ENCODE measurements at regions of chr17 and their contacts with region 1.

Region 1: DNA sequence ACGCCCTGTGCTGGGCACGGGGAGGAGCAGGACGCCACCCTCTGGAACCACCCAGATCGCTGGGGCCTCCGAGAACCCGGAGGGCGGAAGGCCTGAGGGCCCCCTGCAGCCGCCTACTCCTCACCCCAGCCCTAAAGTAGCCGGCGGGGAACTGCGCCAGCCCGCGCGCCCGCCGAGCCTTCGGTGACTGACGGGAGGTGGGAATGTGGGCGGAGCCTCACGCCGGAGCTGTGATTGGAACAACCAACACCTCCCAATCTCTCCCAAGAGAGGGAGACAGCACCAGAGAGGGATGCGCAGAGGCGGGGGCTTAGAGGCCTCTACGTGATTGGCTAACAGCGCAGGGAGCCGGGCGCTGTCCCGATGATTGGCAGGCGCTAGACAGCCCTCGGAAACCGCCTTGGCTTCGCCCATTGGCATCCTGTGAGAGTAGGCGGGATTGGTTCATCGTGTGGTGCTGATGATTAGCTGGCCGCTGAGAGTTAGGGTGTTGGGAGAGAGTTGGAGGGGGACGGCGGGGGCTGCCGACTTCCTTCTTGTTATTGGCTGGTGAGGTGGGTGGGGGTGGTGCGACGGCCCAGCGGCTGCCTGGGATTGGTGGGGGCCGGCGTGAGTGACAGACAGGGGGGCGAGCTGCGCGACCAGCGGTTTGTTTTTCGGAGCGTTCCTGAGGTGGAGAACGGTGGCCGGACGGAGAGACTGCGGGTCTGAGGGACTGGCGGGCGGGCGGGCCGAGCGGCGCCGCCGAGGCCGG is at the start of gene MAP3K3:
- DNase-seq: peak; percentile 99
- H3K4me3 Mint-ChIP-seq: peak within 1 kb of the TSS; percentile 97
- H3K27ac Mint-ChIP-seq: peak within 1 kb of the TSS; percentile 82
- H3K4me1 Mint-ChIP-seq: peaks cover 35% of the 10 kb centered on the region
- H3K27me3 Mint-ChIP-seq: no peaks in the 10 kb centered on the region
- total RNA-seq, gene MAP3K3: 28.8 to 29.6 TPM

Region 2: DNA sequence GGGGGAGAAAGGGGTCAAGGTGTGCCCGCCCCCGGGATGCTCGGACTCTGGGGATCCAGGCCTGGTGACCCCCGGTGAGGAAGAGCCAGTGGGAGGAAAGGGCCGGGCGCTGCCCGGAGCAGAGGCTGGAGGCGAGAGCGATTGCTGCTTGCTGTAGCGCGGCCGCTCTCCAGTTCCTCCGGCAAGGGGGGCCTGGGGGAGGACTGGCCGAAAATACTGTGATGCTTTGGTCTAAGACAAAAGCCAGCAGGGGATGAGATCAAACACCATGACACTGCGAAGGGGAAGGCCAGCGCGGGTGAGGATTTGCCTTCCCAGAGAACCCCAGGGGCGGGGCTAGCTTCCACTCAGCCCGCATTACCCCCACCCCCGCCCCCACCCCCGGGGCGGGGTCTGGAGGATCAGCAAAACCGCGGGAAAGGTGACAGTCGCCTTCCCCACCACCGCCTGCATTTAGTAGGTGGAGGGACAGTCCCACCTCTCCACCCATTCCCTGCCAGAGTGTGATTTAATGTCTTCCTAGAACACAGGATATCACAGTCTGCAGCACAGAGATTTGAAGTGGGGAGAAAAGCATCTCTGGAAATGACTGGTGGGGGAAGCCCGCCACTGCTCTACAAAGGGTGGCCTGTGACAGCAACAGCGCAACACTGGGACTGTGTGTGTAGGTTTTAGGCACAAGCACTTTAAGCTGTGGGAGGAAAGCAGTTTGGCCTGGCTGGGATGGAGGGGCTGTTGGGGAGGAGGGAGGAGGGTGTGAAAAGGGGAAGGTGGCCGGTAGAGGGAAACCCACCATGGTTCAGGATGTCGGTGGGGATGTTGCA is 968.7 kb before region 1 on chr17:
- CTCF ChIA-PET with region 1: no interaction called
- intact Hi-C with region 1: loop called (anchors 1 kb)
- DNase-seq: peak; percentile 98
- H3K4me3 Mint-ChIP-seq: peak overlapping the region; percentile 76
- H3K27ac Mint-ChIP-seq: peak overlapping the region; percentile 69
- H3K4me1 Mint-ChIP-seq: peaks cover 19% of the 10 kb centered on the region
- H3K27me3 Mint-ChIP-seq: peaks cover 39% of the 10 kb centered on the region

Region 3: DNA sequence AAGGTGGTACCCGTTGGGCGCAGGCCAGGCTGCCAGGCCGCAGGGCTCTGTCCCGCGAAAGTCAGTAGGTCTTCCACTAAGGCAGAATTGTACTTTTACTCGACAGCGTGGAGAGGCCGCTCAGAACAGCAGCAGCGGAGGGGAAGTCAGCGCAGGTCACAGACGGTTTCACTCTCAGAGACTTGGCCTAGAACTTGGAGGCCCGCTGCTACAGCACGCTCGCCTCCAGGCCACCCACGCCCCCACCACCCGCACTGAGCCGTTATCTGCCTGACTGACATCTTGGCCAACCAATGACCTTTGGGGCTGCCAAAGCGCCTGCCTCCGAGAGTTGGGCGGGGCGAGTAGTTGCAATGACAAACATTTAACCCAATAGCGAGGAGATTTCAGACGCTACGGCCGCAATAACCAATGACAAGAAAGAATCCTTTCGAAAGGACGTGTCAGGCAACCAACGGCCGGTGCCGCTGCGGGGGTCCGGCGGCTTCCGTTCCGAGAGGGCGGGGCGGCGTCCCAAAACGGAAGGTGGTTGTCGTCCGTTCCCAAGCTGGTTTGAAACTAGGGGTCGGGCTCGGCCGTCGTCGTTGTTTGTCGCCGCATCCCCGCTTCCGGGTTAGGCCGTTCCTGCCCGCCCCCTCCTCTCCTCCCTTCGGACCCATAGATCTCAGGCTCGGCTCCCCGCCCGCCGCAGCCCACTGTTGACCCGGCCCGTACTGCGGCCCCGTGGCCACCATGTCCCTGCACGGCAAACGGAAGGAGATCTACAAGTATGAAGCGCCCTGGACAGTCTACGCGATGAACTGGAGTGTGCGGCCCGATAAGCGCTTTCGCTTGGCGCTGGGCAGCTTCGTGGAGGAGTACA is 71.8 kb before region 1 on chr17 and contains the start of gene DCAF7:
- CTCF ChIA-PET with region 1: no interaction called
- intact Hi-C with region 1: loop called (anchors 1 kb)
- DNase-seq: peak; percentile 100
- H3K4me3 Mint-ChIP-seq: peak within 1 kb of the TSS; percentile 82
- H3K27ac Mint-ChIP-seq: peak within 1 kb of the TSS; percentile 94
- H3K4me1 Mint-ChIP-seq: peaks cover 33% of the 10 kb centered on the region
- H3K27me3 Mint-ChIP-seq: no peaks in the 10 kb centered on the region
- total RNA-seq, gene DCAF7: 102 to 103 TPM

Region 4: GRCh38 chr17:63611354-63611753 is 10.6 kb before region 1 on chr17:
- CTCF ChIA-PET with region 1: interaction called, 11 read pairs
- intact Hi-C with region 1: no loop called
- DNase-seq: peak; percentile 65
- H3K4me3 Mint-ChIP-seq: peak overlapping the region; percentile 66
- H3K27ac Mint-ChIP-seq: peak overlapping the region; percentile 97
- H3K4me1 Mint-ChIP-seq: peaks cover 28% of the 10 kb centered on the region
- H3K27me3 Mint-ChIP-seq: no peaks in the 10 kb centered on the region

Region 5: DNA sequence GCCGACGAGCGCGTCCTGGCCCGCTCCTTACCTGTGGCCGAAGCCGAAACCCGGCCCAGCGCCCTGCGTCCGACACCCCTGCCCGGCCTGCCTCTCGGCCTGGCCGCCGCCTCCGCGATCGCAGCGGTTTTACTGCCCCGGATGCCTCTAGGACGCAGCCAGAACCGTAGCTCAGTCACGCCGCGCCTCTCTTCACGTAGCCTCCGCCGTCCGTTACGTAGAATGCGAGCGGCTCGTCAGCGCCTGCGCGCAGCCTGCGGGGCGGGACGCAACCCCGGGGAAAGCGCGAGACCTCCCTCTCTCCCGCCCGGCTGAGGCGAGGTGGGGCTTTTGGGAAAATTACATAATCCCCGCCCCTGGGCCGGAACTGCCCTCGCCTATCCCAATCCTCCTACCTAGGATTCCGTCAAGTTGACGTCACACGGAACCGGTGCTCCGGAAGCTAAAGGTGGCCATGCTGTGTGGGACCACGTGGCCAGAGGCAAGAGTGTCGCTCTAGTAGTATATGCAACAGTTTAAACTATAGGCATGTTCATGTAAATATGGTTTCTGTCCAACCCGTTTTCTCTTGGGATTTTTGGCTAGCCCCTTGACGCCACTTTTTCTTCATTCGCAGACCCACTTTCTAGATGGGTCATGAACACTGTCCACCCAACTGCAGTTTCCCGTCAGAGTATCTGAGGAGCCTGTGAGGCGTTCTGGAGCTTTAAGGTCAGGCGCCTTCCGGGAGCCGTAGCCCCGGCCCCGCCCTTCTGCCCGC is 151.6 kb after region 1 on chr17 and contains the start of gene CCDC47:
- CTCF ChIA-PET with region 1: no interaction called
- intact Hi-C with region 1: loop called (anchors 1 kb)
- DNase-seq: peak; percentile 99
- H3K4me3 Mint-ChIP-seq: peak within 1 kb of the TSS; percentile 98
- H3K27ac Mint-ChIP-seq: peak within 1 kb of the TSS; percentile 100
- H3K4me1 Mint-ChIP-seq: peaks cover 58% of the 10 kb centered on the region
- H3K27me3 Mint-ChIP-seq: no peaks in the 10 kb centered on the region
- total RNA-seq, gene CCDC47: 40.5 to 42.1 TPM

Region 6: DNA sequence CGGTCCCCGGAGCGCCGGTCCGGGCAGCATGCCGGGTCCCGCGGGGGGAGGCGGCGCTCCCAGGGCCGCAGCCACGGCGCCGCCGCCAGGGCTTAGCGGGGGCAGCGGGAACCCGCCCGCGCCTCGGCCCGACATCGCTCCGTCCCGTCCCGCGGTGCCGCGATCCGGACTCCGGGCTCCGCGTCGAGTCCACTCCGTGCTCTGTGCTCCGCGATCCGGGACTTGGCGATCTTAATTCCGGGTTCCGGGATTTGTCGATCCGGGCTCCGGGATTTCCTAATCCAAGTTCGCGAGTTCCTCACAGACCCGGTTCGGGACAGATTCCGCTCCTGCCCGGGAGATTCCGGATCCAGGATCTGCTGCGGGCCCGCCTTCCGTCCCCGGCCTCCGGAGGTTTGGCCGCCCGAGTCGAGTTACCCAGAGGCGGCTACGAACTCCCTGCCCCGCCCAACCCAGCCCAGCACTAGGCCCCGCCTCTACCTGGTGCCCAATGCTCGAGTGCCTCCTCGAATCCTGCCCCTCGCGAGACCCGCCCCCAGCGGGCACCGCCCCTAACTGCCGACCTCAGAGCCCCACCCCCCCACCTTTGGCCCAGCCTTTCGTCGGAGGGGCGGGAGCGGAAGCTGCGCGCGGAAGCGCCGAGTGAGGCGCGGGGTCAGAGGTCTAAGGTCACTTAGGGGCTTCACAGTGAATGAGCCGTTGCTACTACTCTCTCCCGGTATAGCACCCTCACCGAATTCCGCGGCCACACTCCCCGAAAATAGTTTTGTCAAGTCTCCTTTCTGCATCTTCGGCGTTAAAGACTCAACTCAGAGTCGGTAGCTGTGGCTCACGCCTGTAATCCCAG is 220.8 kb after region 1 on chr17 and contains the start of gene SMARCD2:
- CTCF ChIA-PET with region 1: no interaction called
- intact Hi-C with region 1: loop called (anchors 1 kb)
- DNase-seq: peak; percentile 100
- H3K4me3 Mint-ChIP-seq: peak within 1 kb of the TSS; percentile 94
- H3K27ac Mint-ChIP-seq: peak within 1 kb of the TSS; percentile 94
- H3K4me1 Mint-ChIP-seq: peaks cover 40% of the 10 kb centered on the region
- H3K27me3 Mint-ChIP-seq: no peaks in the 10 kb centered on the region
- total RNA-seq, gene SMARCD2: 98.5 to 107 TPM

Measured in activated naive CD4-positive, alpha-beta T cell treated with anti-CD3 and anti-CD28 coated beads for 36 hours (primary cell).